ENCODE measurements at regions of chr6 and their contacts with region 1.

Region 1: GRCh38 chr6:43369174-43370022 is at the start of gene ZNF318:
- DNase-seq: peak; percentile 98
- total RNA-seq, gene ZNF318: 13.8 TPM

Region 2: GRCh38 chr6:43171284-43172103 is 197.9 kb before region 1 on chr6:
- intact Hi-C with region 1: loop called (anchors 2 kb)
- DNase-seq: no peak

Region 3: DNA sequence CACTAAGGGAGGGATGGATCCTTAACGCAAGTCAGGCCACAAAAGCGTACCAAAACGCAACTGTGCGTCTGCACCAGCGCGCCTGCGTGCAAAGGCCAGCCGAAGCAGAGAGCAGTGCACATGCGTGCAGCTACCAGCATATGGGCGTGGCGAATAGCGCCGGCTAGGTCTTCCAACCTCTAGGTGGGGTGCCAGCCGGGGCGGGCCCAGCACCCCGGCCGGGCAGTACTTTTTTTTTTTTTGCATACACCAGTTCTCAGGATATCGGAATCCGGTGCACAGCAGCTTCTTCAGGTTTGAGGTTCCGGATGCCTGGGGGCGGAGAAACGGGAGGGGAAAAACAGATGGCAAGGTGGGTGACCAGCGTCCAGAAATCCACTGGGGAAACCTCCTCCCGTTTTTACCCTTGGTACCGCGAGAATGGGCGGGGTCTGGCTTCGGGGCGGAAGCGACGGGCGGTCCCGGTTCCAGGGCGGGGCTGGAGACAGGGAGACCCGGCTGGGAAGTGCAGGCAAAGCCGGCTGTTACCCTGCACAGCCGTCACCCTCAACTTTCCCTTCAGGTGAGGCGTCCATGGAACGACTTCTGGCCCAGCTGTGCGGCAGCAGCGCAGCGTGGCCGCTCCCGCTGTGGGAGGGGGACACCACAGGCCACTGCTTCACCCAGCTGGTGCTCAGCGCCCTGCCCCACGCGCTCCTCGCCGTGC is 58.2 kb after region 1 on chr6 and contains the start of gene ABCC10:
- intact Hi-C with region 1: loop called (anchors 1 kb)
- DNase-seq: peak; percentile 97
- total RNA-seq, gene ABCC10: 9.3 TPM

Measured in cardiac septum (tissue), 1 donor.